Testis (tissue), 5 donors: ENCODE measurements at regions of chr19 and their contacts with region 1.

Region 1: GRCh38 chr19:12789904-12790619 is 1.2 kb upstream of the JUNB start:
- DNase-seq: peak; percentile 97
- H3K4me3 ChIP-seq: peak overlapping the region; percentile 60 to 88
- H3K27ac ChIP-seq: peak overlapping the region; percentile 93 to 98
- H3K4me1 ChIP-seq: peaks cover 46% of the 10 kb centered on the region
- H3K27me3 ChIP-seq: no peaks in the 10 kb centered on the region
- CTCF ChIP-seq: no peak
- POLR2A ChIP-seq: peak; percentile 36

Region 2: DNA sequence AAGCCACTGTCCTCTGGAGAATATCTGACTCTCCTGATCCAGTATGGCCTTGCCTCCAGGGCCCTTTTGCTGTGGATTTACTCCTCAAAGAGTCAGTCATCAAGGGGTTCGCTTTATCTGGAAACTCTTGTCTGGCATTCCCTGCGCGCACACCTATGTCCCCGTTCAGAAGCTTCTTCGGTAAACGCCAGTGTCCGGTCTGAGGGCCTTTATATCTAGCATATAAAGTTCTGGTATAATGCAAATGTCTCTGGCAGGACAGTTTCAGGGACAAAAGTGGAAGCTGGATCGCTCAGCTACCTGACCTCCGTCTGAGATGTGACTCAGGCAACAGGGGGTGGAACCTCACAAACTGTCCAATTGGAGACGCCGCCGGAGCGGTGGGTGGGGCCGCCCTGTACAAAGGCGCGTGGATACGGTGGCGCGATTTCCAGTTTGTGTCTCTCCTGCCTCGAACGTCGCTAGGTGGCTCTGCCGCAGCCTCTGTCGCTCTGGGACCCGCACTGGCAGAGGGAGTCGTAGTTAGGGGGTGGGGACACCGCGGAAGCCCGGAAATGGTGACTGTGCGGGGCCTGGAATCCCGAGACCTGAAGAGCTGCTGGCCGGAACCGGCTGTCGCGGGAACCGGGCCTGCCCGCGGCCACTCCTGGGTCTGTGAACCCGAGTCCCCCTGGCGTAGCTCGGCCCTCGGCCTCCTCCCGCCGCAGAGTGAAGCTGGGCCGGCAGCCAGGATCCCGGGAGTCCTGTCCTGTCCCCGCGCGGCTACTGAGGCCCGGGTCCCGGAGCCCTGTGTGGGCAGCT is 294.9 kb before region 1 on chr19:
- intact Hi-C with region 1: no loop called
- DNase-seq: peak; percentile 97
- H3K4me3 ChIP-seq: peak overlapping the region; percentile 68 to 70
- H3K27ac ChIP-seq: peak overlapping the region; percentile 72 to 73
- H3K4me1 ChIP-seq: no peaks in the 10 kb centered on the region
- H3K27me3 ChIP-seq: no peaks in the 10 kb centered on the region
- CTCF ChIP-seq: peak in 1 of 3 experiments; percentile 10
- POLR2A ChIP-seq: no peak

Region 3: GRCh38 chr19:12696366-12697335 is 93.4 kb before region 1 on chr19 and contains the start of gene FBXW9:
- intact Hi-C with region 1: no loop called
- DNase-seq: peak; percentile 99
- H3K4me3 ChIP-seq: peak within 1 kb of the TSS; percentile 69 to 83
- H3K27ac ChIP-seq: peak within 1 kb of the TSS; percentile 14 to 64
- H3K4me1 ChIP-seq: peaks cover 12% of the 10 kb centered on the region
- H3K27me3 ChIP-seq: no peaks in the 10 kb centered on the region
- CTCF ChIP-seq: peak in 1 of 3 experiments; percentile 4
- POLR2A ChIP-seq: no peak
- total RNA-seq, gene FBXW9: 20.5 to 23.3 TPM

Region 4: GRCh38 chr19:12736995-12737834 is 52.8 kb before region 1 on chr19 and contains the start of gene GET3:
- intact Hi-C with region 1: loop called (anchors 10 kb)
- DNase-seq: peak; percentile 98
- H3K4me3 ChIP-seq: peak within 1 kb of the TSS; percentile 69 to 76
- H3K27ac ChIP-seq: peak within 1 kb of the TSS; percentile 89 to 92
- H3K4me1 ChIP-seq: peaks cover 20% of the 10 kb centered on the region
- H3K27me3 ChIP-seq: no peaks in the 10 kb centered on the region
- CTCF ChIP-seq: peak in 2 of 3 experiments; percentile 23 to 33
- POLR2A ChIP-seq: no peak
- total RNA-seq, gene GET3: 89.3 to 109 TPM

Region 5: GRCh38 chr19:13152974-13153629 is 363.0 kb after region 1 on chr19:
- intact Hi-C with region 1: no loop called
- DNase-seq: peak; percentile 89
- H3K4me3 ChIP-seq: peak overlapping the region; percentile 73 to 78
- H3K27ac ChIP-seq: peak overlapping the region; percentile 60 to 96
- H3K4me1 ChIP-seq: peaks cover 18% of the 10 kb centered on the region
- H3K27me3 ChIP-seq: no peaks in the 10 kb centered on the region
- CTCF ChIP-seq: no peak
- POLR2A ChIP-seq: peak; percentile 82